Activated B cell treated with CpG ODN at 0.5 μM for 24 hours (primary cell): ENCODE measurements at regions of chr13 and their contacts with region 1.

Region 1: GRCh38 chr13:114025714-114026431 is 52.0 kb upstream of the C13orf46 start:
- DNase-seq: no peak
- ATAC-seq: no peak
- H3K4me3 Mint-ChIP-seq: no peak overlapping the region
- H3K27ac Mint-ChIP-seq: peak overlapping the region; percentile 78
- H3K4me1 Mint-ChIP-seq: peaks cover 68% of the 10 kb centered on the region
- H3K27me3 Mint-ChIP-seq: no peaks in the 10 kb centered on the region
- CTCF ChIP-seq: no peak

Region 2: DNA sequence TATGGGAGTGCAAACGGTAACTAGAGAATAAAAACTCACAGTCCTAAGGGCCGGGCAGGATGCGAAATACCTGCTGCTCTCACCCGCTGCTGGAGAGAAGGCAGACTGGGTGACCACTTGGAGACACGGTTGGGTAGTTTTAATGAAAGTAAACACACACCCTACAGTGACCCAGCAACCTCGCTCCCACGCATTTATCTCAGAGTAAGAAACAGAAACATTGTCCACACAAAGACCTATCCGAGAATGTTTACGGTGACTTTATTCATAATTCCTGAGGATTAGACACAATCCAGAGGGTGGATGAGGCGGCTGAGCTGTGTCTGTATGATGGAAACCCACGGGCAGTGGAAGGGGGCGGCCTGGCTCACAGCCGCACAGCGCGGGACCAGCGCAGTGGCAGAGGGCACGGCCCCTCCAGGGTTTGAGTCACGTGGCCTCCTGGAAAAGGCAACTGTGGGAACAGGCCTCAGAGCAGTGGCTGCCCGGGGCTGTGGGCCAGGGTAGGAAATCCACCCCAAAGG is 21.5 kb after region 1 on chr13:
- CTCF ChIA-PET with region 1: no interaction called
- POLR2A ChIA-PET with region 1: interaction called, 3 read pairs
- intact Hi-C with region 1: loop called (anchors 2 kb)
- DNase-seq: no peak
- ATAC-seq: no peak
- H3K4me3 Mint-ChIP-seq: peak overlapping the region; percentile 58
- H3K27ac Mint-ChIP-seq: peak overlapping the region; percentile 74
- H3K4me1 Mint-ChIP-seq: peaks cover 78% of the 10 kb centered on the region
- H3K27me3 Mint-ChIP-seq: no peaks in the 10 kb centered on the region
- CTCF ChIP-seq: no peak

Region 3: GRCh38 chr13:114065141-114065925 is 39.5 kb after region 1 on chr13:
- CTCF ChIA-PET with region 1: no interaction called
- POLR2A ChIA-PET with region 1: interaction called, 15 read pairs
- intact Hi-C with region 1: loop called (anchors 1 kb)
- DNase-seq: peak; percentile 61
- ATAC-seq: peak; percentile 81
- H3K4me3 Mint-ChIP-seq: peak overlapping the region; percentile 82
- H3K27ac Mint-ChIP-seq: peak overlapping the region; percentile 91
- H3K4me1 Mint-ChIP-seq: peaks cover 68% of the 10 kb centered on the region
- H3K27me3 Mint-ChIP-seq: no peaks in the 10 kb centered on the region
- CTCF ChIP-seq: no peak